Transverse colon (tissue), 4 donors: ENCODE measurements at regions of chr1 and their contacts with region 1.

Region 1: DNA sequence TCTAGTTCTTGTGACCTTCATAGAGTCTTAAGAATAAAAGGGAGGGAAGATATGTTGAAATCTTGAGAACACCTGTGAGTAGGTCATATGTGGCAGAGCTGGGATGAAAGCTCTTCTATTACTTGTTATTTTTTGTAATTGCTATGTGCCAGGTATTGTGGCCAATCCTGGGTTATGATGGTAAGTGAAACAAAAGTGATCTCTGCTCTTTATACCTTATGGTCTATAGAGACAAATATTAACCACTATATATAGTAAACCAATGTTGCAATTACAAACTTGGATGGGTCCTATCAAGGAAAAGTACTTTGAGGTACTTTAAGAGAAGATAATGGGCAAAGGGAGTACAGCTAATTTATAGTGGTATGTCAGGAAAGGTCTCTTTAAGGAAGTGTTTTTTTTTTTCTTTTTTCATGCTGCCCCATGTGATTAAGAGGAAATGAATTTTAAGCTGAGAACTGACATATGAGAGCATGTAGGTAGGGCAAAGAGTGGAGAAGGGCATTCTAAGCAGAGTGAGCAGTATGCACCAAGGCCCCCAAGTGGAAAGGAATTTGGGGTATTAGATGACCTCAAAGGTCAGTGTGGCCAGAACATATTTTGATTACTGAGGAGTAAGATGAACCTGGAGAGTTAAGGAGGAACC is 43.3 kb downstream of the POU2F1 start:
- DNase-seq: no peak
- H3K4me3 ChIP-seq: no peak overlapping the region
- H3K27ac ChIP-seq: peak overlapping the region in 2 of 4 donors; percentile 15 to 35
- H3K4me1 ChIP-seq: peaks cover 14 to 67% (median 32%) of the 10 kb centered on the region in 4 donors
- H3K27me3 ChIP-seq: no peaks in the 10 kb centered on the region
- CTCF ChIP-seq: no peak
- EP300 ChIP-seq: no peak
- POLR2A ChIP-seq: no peak

Region 2: DNA sequence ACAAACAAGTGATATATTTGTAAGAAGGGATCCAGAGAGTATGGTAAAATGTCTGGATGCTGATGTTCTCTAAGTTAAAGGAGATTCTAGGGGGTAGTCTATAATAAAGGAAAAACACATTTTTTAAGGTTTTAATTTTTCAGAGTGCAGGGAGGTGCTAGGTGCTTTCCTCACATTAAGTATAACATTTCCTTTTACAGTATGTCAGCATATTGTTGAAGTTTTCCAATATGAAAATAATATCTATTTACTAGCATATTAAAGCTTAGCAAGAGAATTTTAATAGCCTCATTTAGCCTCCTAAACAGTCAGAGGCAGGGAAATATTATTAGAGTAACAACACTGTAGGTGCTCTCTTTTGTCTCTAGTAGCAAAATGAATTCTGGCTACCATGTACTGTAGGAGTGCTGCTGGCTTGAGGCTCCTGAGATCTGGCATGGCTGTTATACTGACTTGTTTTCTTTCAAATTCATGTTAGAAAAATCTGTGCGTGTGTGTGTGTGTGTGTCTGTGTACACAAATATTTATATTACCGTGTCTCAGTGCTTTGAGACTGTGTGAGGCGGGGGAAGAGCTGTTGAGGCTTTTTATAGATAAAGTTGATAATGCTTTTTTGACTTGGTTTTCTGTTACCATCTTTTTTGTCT is 27.7 kb after region 1 on chr1:
- in situ Hi-C with region 1: no loop called
- intact Hi-C with region 1: loop called (anchors 1 kb)
- DNase-seq: no peak
- H3K4me3 ChIP-seq: no peak overlapping the region
- H3K27ac ChIP-seq: no peak overlapping the region
- H3K4me1 ChIP-seq: peaks cover 5 to 41% (median 18%) of the 10 kb centered on the region in 4 donors
- H3K27me3 ChIP-seq: no peaks in the 10 kb centered on the region
- CTCF ChIP-seq: no peak
- EP300 ChIP-seq: no peak
- POLR2A ChIP-seq: no peak

Region 3: GRCh38 chr1:167342846-167343245 is 78.9 kb after region 1 on chr1:
- in situ Hi-C with region 1: loop called in 1 of 4 experiments (anchors 10 kb)
- intact Hi-C with region 1: no loop called
- DNase-seq: no peak
- H3K4me3 ChIP-seq: no peak overlapping the region
- H3K27ac ChIP-seq: no peak overlapping the region
- H3K4me1 ChIP-seq: peaks cover 0 to 3% (median 0%) of the 10 kb centered on the region in 4 donors
- H3K27me3 ChIP-seq: no peaks in the 10 kb centered on the region
- CTCF ChIP-seq: peak in 3 of 5 experiments; percentile 27 to 48 (median 28)
- EP300 ChIP-seq: no peak
- POLR2A ChIP-seq: no peak

Region 4: GRCh38 chr1:167442124-167442848 is 178.3 kb after region 1 on chr1:
- in situ Hi-C with region 1: loop called (anchors 5 to 25 kb)
- intact Hi-C with region 1: loop called (anchors 5 kb)
- DNase-seq: peak; percentile 96
- H3K4me3 ChIP-seq: no peak overlapping the region
- H3K27ac ChIP-seq: peak overlapping the region; percentile 51 to 82 (median 76)
- H3K4me1 ChIP-seq: peaks cover 0 to 21% (median 15%) of the 10 kb centered on the region in 4 donors
- H3K27me3 ChIP-seq: peaks cover 9% of the 10 kb centered on the region
- CTCF ChIP-seq: peak; percentile 82 to 92 (median 85)
- EP300 ChIP-seq: peak; percentile 16
- POLR2A ChIP-seq: no peak

Region 5: GRCh38 chr1:167447521-167448136 is 183.7 kb after region 1 on chr1:
- in situ Hi-C with region 1: loop called (anchors 5 to 25 kb)
- intact Hi-C with region 1: loop called (anchors 5 kb)
- DNase-seq: peak; percentile 64
- H3K4me3 ChIP-seq: no peak overlapping the region
- H3K27ac ChIP-seq: peak overlapping the region; percentile 37 to 57 (median 52)
- H3K4me1 ChIP-seq: peaks cover 0 to 8% (median 5%) of the 10 kb centered on the region in 4 donors
- H3K27me3 ChIP-seq: no peaks in the 10 kb centered on the region
- CTCF ChIP-seq: no peak
- EP300 ChIP-seq: no peak
- POLR2A ChIP-seq: peak; percentile 41

Region 6: DNA sequence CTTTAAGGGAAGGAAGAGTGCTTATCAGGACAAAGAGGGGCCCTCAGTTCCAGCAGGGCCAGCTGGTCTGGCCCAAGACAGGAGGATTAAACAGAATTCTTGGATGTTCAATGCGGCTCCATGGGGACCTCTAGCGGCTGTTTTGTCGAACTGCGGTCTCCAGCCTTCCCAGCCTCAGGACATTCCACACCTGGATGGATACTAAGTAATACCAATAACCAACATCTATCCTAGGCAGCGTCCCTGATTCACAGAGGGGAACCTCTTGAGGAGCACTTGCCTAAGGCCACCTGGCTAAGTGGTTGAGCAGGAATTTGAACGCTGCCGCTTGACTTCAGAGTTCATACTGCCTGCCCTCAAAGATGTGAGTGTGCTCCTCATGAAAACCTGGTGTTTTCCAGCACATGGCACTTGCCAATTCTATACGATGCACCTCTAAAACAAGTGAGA is 269.9 kb after region 1 on chr1:
- in situ Hi-C with region 1: loop called in 2 of 4 experiments (anchors 10 to 25 kb)
- intact Hi-C with region 1: loop called (anchors 10 kb)
- DNase-seq: peak; percentile 74
- H3K4me3 ChIP-seq: no peak overlapping the region
- H3K27ac ChIP-seq: no peak overlapping the region
- H3K4me1 ChIP-seq: no peaks in the 10 kb centered on the region
- H3K27me3 ChIP-seq: no peaks in the 10 kb centered on the region
- CTCF ChIP-seq: peak; percentile 73 to 91 (median 88)
- EP300 ChIP-seq: no peak
- POLR2A ChIP-seq: no peak

Region 7: GRCh38 chr1:167553136-167554027 is 289.4 kb after region 1 on chr1 and contains the start of gene CREG1:
- in situ Hi-C with region 1: loop called in 2 of 4 experiments (anchors 10 to 25 kb)
- intact Hi-C with region 1: no loop called
- DNase-seq: peak; percentile 96
- H3K4me3 ChIP-seq: peak within 1 kb of the TSS; percentile 73 to 84 (median 78)
- H3K27ac ChIP-seq: peak within 1 kb of the TSS; percentile 89 to 93 (median 92)
- H3K4me1 ChIP-seq: peaks cover 8 to 31% (median 17%) of the 10 kb centered on the region in 4 donors
- H3K27me3 ChIP-seq: no peaks in the 10 kb centered on the region
- CTCF ChIP-seq: no peak
- EP300 ChIP-seq: no peak
- POLR2A ChIP-seq: peak; percentile 75
- total RNA-seq, gene CREG1: 55.4 to 115 (median 97.5) TPM